Calu3 (cell line): ENCODE measurements at regions of chr3 and their contacts with region 1.

Region 1: GRCh38 chr3:136861890-136862616 is at the start of gene NCK1:
- DNase-seq: peak; percentile 100
- H3K4me3 Mint-ChIP-seq: peak within 1 kb of the TSS; percentile 99
- H3K27ac Mint-ChIP-seq: peak within 1 kb of the TSS; percentile 89
- H3K4me1 Mint-ChIP-seq: peaks cover 47% of the 10 kb centered on the region
- H3K27me3 Mint-ChIP-seq: no peaks in the 10 kb centered on the region
- CTCF ChIP-seq: no peak
- total RNA-seq, gene NCK1: 108 and 127 TPM in 2 replicates

Region 2: DNA sequence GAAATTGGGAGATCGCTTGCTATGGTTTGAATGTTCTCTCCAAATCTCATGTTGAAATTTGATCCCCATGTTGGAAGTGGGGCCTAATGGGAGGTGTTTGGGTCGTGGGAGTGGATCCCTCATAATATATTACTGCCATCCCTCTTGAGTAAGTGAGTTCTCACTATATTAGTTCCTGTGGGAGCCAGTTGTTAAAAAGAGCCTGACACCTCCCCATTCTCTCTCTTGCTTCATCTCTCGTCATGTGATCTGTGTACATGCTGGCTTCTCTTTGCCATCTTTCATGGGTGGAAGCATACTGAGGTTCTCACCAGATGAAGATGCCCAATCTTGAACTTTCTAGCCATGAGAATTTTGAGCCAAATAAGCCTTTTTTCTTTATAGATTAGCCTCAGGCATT is 52.7 kb after region 1 on chr3:
- CTCF ChIA-PET with region 1: interaction called, 4 read pairs
- intact Hi-C with region 1: loop called (anchors 1 kb)
- DNase-seq: no peak
- H3K4me3 Mint-ChIP-seq: no peak overlapping the region
- H3K27ac Mint-ChIP-seq: no peak overlapping the region
- H3K4me1 Mint-ChIP-seq: peaks cover 56% of the 10 kb centered on the region
- H3K27me3 Mint-ChIP-seq: no peaks in the 10 kb centered on the region
- CTCF ChIP-seq: no peak

Region 3: DNA sequence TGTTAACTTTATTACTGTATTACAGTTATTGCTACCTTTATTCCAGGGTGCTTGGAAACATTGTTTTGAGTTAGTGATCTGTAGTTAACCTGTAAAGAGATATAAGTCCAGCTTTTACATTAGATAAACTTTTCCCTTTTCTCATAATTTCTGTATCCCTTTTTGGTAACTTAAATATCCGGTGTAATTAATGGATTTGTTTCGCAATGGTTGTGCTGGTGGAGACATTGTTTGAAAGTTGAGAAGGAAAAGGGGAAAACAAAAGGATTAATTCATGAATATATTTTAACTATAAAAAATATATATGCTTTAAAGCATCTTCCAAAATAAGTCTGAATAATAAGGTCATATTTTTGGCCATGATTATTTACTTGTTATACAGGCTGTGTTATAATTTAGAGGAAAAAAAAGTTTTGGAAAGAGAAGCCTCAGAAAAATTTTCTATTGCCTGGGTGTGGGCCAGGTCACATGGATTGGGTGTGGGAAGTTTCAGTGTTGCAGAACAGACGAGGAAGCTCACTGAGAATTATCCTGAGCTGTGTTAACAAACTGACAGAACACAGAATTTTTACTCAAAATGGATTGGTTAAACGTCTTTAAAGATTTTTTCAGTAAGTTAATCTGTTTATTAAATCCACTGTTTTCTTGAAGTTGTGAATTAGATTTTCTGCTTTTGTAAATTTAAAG is 68.1 kb after region 1 on chr3:
- CTCF ChIA-PET with region 1: interaction called, 5 read pairs
- intact Hi-C with region 1: loop called (anchors 2 kb)
- DNase-seq: peak; percentile 62
- H3K4me3 Mint-ChIP-seq: peak overlapping the region; percentile 62
- H3K27ac Mint-ChIP-seq: peak overlapping the region; percentile 78
- H3K4me1 Mint-ChIP-seq: peaks cover 59% of the 10 kb centered on the region
- H3K27me3 Mint-ChIP-seq: no peaks in the 10 kb centered on the region
- CTCF ChIP-seq: no peak

Region 4: GRCh38 chr3:136938334-136938733 is 76.3 kb after region 1 on chr3:
- CTCF ChIA-PET with region 1: interaction called, 8 read pairs
- intact Hi-C with region 1: loop called (anchors 2 kb)
- DNase-seq: no peak
- H3K4me3 Mint-ChIP-seq: peak overlapping the region; percentile 12
- H3K27ac Mint-ChIP-seq: peak overlapping the region; percentile 41
- H3K4me1 Mint-ChIP-seq: peaks cover 54% of the 10 kb centered on the region
- H3K27me3 Mint-ChIP-seq: no peaks in the 10 kb centered on the region
- CTCF ChIP-seq: no peak

Region 5: GRCh38 chr3:136955813-136956212 is 93.8 kb after region 1 on chr3:
- CTCF ChIA-PET with region 1: interaction called, 5 read pairs
- intact Hi-C with region 1: loop called (anchors 5 kb)
- DNase-seq: peak; percentile 79
- H3K4me3 Mint-ChIP-seq: peak overlapping the region; percentile 47
- H3K27ac Mint-ChIP-seq: peak overlapping the region; percentile 89
- H3K4me1 Mint-ChIP-seq: peaks cover 89% of the 10 kb centered on the region
- H3K27me3 Mint-ChIP-seq: no peaks in the 10 kb centered on the region
- CTCF ChIP-seq: no peak

Region 6: DNA sequence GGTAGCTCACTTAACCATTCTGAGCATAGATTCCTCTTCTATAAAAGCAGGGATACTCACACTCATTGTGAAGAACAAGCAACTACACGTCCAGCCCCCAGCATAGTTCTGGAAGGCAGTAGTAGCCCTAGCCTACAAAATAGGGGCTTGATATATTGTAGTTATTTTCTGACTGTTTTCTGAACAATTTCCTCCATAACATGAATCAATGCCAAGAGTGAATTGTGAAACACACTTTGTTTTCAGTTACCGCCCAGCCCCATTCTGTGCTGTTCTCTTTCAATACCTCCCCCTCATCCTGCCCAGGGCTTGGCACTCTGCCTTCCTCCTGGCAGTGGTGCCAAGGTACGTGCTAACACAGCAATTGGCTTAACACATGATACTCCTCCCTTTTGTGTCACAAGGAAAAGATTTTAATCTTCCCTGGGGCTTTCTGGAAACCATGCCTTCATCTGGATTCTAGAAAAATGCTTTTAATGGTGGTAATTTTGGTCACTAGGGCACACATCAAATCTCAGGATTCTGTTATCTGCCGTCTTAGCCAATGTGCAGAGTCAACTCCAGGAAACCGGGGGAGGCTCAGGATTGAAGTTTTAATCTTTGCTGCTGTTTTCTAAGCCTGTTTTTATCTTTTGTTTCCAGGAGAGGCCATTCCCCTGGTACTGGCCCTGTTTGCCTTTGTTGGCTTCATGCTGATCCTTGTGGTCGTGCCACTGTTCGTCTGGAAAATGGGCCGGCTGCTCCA is 132.9 kb after region 1 on chr3:
- CTCF ChIA-PET with region 1: interaction called, 3 read pairs
- intact Hi-C with region 1: loop called (anchors 5 kb)
- DNase-seq: peak; percentile 93
- H3K4me3 Mint-ChIP-seq: no peak overlapping the region
- H3K27ac Mint-ChIP-seq: peak overlapping the region; percentile 63
- H3K4me1 Mint-ChIP-seq: peaks cover 21% of the 10 kb centered on the region
- H3K27me3 Mint-ChIP-seq: no peaks in the 10 kb centered on the region
- CTCF ChIP-seq: no peak